ENCODE measurements at regions of chrX and their contacts with region 1.

Region 1: DNA sequence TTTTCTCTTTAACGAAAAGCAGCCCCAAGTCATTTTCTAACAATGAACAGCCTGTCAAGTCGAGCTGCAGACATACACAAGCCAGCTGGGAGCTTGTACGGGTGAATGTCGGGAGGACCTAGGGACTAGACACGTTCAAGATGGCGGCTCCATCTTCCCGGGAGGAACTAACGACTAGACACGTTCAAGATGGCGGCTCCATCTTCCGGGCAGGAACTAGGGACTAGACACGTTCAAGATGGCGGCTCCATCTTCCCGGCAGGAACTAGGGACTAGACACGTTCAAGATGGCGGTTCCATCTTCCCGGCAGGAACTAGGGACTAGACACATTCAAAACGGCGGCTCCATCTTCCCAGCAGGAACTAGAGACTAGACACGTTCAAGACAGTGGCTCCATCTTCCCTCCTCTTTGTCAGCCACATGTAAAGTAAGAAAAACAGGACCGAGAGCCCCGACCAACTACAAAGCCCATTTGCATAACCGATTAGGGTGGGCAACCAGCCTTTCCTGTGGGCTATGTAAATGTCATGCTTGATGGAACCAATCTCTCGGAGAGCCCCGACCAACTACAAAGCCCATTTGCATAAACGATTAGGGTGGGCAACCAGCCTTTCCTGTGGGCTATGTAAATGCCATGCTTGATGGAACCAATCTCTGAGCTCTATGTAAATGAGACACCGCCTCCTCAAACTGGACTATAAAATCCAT is 175.5 kb downstream of the DHRSX start:
- DNase-seq: peak; percentile 96
- H3K4me3 ChIP-seq: peak overlapping the region in 3 of 4 donors; percentile 30 to 52 (median 39)
- H3K27ac ChIP-seq: peak overlapping the region; percentile 10 to 75 (median 67)
- H3K4me1 ChIP-seq: peaks cover 0 to 9% (median 8%) of the 10 kb centered on the region in 4 donors
- H3K27me3 ChIP-seq: no peaks in the 10 kb centered on the region
- CTCF ChIP-seq: no peak
- EP300 ChIP-seq: no peak
- POLR2A ChIP-seq: no peak

Region 2: DNA sequence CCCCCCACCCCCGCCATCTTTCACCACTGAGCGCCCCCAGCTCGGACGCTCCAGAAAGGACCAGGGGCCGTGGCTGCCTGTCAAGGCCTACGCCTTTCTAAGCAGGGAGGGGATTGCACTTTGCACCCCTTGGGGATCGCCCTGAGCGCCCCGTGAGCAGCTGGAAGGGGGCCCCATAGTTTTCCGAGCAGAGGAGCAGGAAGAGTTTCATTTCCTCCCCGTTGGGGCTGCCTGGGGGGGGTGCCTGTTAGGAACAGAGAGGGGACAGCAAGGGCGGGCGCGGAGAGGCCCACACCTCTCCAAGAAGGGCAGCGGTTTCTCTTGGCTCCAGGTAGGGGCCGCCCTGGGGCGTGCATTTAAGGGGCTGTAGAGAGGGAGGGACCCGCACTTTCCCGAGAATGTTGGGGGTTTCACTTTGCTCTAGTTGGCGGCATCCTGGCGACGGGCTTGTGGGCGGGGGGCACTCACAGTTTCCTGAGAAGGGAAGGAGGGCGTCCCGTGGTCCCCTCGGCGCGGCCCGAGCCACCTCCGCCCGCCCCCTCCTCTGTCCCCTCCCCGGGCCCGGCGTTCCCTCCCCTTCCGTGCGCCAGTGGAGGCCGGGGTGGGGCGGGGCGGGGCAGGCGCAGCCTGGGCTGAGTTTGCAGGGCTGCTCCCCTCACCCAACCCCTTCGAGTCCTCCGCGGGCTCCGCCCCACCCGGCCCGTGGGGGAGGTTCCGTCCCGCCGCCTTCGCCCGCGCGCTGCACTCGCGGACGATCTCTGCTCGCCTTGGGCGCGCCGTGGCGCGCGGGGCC is 283.6 kb after region 1 on chrX:
- intact Hi-C with region 1: loop called (anchors 5 kb)
- DNase-seq: peak; percentile 91
- H3K4me3 ChIP-seq: peak overlapping the region; percentile 63 to 89 (median 76)
- H3K27ac ChIP-seq: peak overlapping the region; percentile 73 to 83 (median 76)
- H3K4me1 ChIP-seq: peaks cover 0 to 14% (median 11%) of the 10 kb centered on the region in 4 donors
- H3K27me3 ChIP-seq: no peaks in the 10 kb centered on the region
- CTCF ChIP-seq: no peak
- EP300 ChIP-seq: no peak
- POLR2A ChIP-seq: no peak